ENCODE measurements at regions of chr19 and their contacts with region 1.

Region 1: GRCh38 chr19:44002566-44003460 is at the start of gene ZNF230:
- DNase-seq: peak; percentile 94 to 95
- H3K4me3 ChIP-seq: peak within 1 kb of the TSS; percentile 67 to 82
- H3K27ac ChIP-seq: peak within 1 kb of the TSS; percentile 76 to 84
- H3K4me1 ChIP-seq: peaks cover 0 to 16% (median 9%) of the 10 kb centered on the region in 4 donors
- H3K27me3 ChIP-seq: no peaks in the 10 kb centered on the region
- CTCF ChIP-seq: no peak

Region 2: DNA sequence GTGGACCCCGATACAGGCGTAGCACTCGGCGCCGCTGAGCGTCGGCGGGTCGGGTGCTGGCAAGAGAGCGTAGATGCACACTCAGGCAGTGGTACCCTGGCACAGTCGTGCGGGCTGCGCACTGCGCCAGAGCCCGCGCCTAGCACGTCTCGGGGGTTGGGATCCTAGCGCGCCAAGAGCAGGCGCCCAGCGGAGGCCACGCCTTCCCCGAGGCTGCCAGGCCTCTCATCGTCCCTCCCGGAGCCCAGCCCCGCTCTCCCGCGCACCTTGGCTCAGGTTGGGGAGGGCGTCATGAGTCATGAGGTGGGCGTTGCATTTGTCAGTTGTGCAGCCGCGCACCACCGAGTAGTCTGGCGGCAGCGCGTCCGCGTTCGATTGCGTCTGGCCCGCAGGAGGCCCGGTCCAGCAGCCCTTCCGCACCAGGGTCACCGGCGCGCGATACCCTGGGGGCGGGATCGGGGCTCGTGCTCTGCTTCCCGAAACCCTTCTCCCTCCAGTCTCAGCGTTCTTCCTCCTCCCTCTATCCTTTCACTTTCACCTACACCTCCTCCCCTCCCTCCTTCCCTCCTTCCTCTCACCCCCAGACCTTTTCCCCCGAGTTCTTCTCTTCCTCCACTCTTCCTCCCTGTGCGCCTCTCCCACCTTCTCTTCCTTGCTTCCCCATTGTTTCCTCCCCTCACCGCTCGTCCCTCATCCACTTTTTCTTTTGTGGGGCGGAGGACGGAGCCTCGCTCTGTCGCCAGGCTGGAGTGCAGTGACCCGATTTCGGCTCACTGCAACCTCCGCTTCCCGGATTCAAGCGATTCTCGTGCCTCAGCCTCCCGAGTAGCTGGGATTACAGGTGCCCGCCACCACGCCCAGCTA is 204.0 kb before region 1 on chr19:
- intact Hi-C with region 1: no loop called
- DNase-seq: no peak
- H3K4me3 ChIP-seq: peak overlapping the region; percentile 38 to 46
- H3K27ac ChIP-seq: no peak overlapping the region
- H3K4me1 ChIP-seq: peaks cover 0 to 13% (median 6%) of the 10 kb centered on the region in 4 donors
- H3K27me3 ChIP-seq: peaks cover 0 to 58% of the 10 kb centered on the region in 2 donors
- CTCF ChIP-seq: no peak

Region 3: GRCh38 chr19:44051654-44052402 is 49.0 kb after region 1 on chr19 and contains the start of gene ZNF223:
- intact Hi-C with region 1: loop called (anchors 10 kb)
- DNase-seq: peak; percentile 96 to 98
- H3K4me3 ChIP-seq: peak within 1 kb of the TSS; percentile 63 to 91
- H3K27ac ChIP-seq: peak within 1 kb of the TSS; percentile 69 to 77
- H3K4me1 ChIP-seq: peaks cover 0 to 19% (median 12%) of the 10 kb centered on the region in 4 donors
- H3K27me3 ChIP-seq: peaks cover 0 to 4% of the 10 kb centered on the region in 2 donors
- CTCF ChIP-seq: no peak

Region 4: GRCh38 chr19:44093931-44094765 is 91.3 kb after region 1 on chr19 and contains the start of gene ZNF224:
- intact Hi-C with region 1: loop called (anchors 10 kb)
- DNase-seq: peak; percentile 90 to 94
- H3K4me3 ChIP-seq: peak within 1 kb of the TSS; percentile 75 to 77
- H3K27ac ChIP-seq: peak within 1 kb of the TSS; percentile 64 to 84
- H3K4me1 ChIP-seq: peaks cover 0 to 15% (median 3%) of the 10 kb centered on the region in 4 donors
- H3K27me3 ChIP-seq: no peaks in the 10 kb centered on the region
- CTCF ChIP-seq: no peak

Measured in tibial artery (tissue), 4 donors.